Activated B cell treated with CpG ODN at 0.5 μM for 24 hours (primary cell): ENCODE measurements at regions of chr22 and their contacts with region 1.

Region 1: GRCh38 chr22:37300551-37301017 is 18.3 kb downstream of the CYTH4 start:
- DNase-seq: no peak
- ATAC-seq: peak; percentile 73
- H3K4me3 Mint-ChIP-seq: peak overlapping the region; percentile 59
- H3K27ac Mint-ChIP-seq: peak overlapping the region; percentile 90
- H3K4me1 Mint-ChIP-seq: peaks cover 57% of the 10 kb centered on the region
- H3K27me3 Mint-ChIP-seq: no peaks in the 10 kb centered on the region
- CTCF ChIP-seq: no peak

Region 2: GRCh38 chr22:35561796-35562526 is 1738.6 kb before region 1 on chr22:
- CTCF ChIA-PET with region 1: no interaction called
- POLR2A ChIA-PET with region 1: no interaction called
- intact Hi-C with region 1: no loop called
- DNase-seq: no peak
- ATAC-seq: no peak
- H3K4me3 Mint-ChIP-seq: no peak overlapping the region
- H3K27ac Mint-ChIP-seq: no peak overlapping the region
- H3K4me1 Mint-ChIP-seq: peaks cover 2% of the 10 kb centered on the region
- H3K27me3 Mint-ChIP-seq: peaks cover 42% of the 10 kb centered on the region
- CTCF ChIP-seq: no peak

Region 3: GRCh38 chr22:37288521-37288920 is 12.1 kb before region 1 on chr22:
- CTCF ChIA-PET with region 1: interaction called, 7 read pairs
- POLR2A ChIA-PET with region 1: interaction called, 10 read pairs
- intact Hi-C with region 1: no loop called
- DNase-seq: no peak
- ATAC-seq: no peak
- H3K4me3 Mint-ChIP-seq: no peak overlapping the region
- H3K27ac Mint-ChIP-seq: peak overlapping the region; percentile 78
- H3K4me1 Mint-ChIP-seq: peaks cover 66% of the 10 kb centered on the region
- H3K27me3 Mint-ChIP-seq: no peaks in the 10 kb centered on the region
- CTCF ChIP-seq: no peak

Region 4: GRCh38 chr22:37484133-37484824 is 183.7 kb after region 1 on chr22:
- CTCF ChIA-PET with region 1: no interaction called
- POLR2A ChIA-PET with region 1: no interaction called
- intact Hi-C with region 1: no loop called
- DNase-seq: peak; percentile 59
- ATAC-seq: peak; percentile 35
- H3K4me3 Mint-ChIP-seq: peak overlapping the region; percentile 93
- H3K27ac Mint-ChIP-seq: peak overlapping the region; percentile 94
- H3K4me1 Mint-ChIP-seq: peaks cover 49% of the 10 kb centered on the region
- H3K27me3 Mint-ChIP-seq: no peaks in the 10 kb centered on the region
- CTCF ChIP-seq: no peak